ENCODE measurements at regions of chr7 and their contacts with region 1.

Region 1: GRCh38 chr7:151759591-151760042 is 117.3 kb downstream of the PRKAG2 start:
- DNase-seq: peak; percentile 72
- H3K4me3 Mint-ChIP-seq: no peak overlapping the region
- H3K27ac Mint-ChIP-seq: no peak overlapping the region
- H3K4me1 Mint-ChIP-seq: peaks cover 19% of the 10 kb centered on the region
- H3K27me3 Mint-ChIP-seq: no peaks in the 10 kb centered on the region

Region 2: GRCh38 chr7:151448261-151449252 is 311.1 kb before region 1 on chr7:
- CTCF ChIA-PET with region 1: interaction called, 36 read pairs
- POLR2A ChIA-PET with region 1: no interaction called
- intact Hi-C with region 1: no loop called
- DNase-seq: peak; percentile 82
- H3K4me3 Mint-ChIP-seq: peak overlapping the region; percentile 65
- H3K27ac Mint-ChIP-seq: no peak overlapping the region
- H3K4me1 Mint-ChIP-seq: peaks cover 4% of the 10 kb centered on the region
- H3K27me3 Mint-ChIP-seq: peaks cover 2% of the 10 kb centered on the region

Region 3: GRCh38 chr7:151519765-151520418 is 239.7 kb before region 1 on chr7 and contains the start of gene RHEB:
- CTCF ChIA-PET with region 1: interaction called, 3 read pairs
- POLR2A ChIA-PET with region 1: no interaction called
- intact Hi-C with region 1: loop called (anchors 2 kb)
- DNase-seq: peak; percentile 99
- H3K4me3 Mint-ChIP-seq: peak within 1 kb of the TSS; percentile 92
- H3K27ac Mint-ChIP-seq: peak within 1 kb of the TSS; percentile 96
- H3K4me1 Mint-ChIP-seq: peaks cover 35% of the 10 kb centered on the region
- H3K27me3 Mint-ChIP-seq: no peaks in the 10 kb centered on the region
- total RNA-seq, gene RHEB: 62.0 to 64.6 TPM

Region 4: DNA sequence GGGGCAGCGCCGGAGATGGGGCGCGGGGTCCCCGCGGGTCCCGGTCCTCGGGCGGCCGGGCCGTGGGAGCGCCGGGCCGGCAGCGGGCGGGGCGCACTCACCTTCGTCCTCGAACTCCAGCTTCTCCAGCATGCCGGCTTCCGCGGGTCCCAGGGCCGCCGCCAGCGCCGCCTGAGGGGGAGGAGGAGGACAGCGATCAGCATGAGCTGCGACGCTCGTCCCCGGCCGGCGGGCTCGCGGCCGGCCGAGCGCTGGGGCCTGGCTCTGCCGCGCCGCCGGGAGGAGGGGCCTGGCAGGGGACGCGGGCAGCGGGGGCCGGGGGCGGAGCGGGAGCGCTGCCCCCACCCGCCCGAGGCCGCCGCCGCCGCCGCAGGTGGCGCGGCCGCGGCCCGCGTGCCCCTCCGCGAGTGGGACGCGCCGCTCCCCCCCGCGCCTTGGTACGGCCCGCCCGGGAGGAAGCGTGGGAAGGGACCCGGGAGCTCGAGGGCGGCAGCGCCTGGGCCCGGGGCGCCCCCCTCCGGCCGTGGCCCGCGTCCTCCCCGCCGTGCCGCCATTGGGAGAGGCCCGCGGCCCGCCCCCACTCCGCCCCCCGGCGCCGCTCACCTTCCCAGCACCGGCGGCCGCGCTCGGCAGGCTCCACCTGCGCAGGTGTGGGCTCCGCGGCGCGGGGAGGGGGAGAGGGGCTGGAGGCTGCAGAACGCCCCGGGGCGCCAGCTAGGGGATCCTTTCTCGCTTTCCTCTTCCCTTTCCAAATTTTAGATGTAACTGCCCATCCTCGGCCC is 127.5 kb before region 1 on chr7:
- CTCF ChIA-PET with region 1: interaction called, 62 read pairs
- POLR2A ChIA-PET with region 1: interaction called, 4 read pairs
- intact Hi-C with region 1: loop called (anchors 1 kb)
- DNase-seq: peak; percentile 90
- H3K4me3 Mint-ChIP-seq: peak overlapping the region; percentile 95
- H3K27ac Mint-ChIP-seq: peak overlapping the region; percentile 99
- H3K4me1 Mint-ChIP-seq: peaks cover 21% of the 10 kb centered on the region
- H3K27me3 Mint-ChIP-seq: no peaks in the 10 kb centered on the region

Region 5: DNA sequence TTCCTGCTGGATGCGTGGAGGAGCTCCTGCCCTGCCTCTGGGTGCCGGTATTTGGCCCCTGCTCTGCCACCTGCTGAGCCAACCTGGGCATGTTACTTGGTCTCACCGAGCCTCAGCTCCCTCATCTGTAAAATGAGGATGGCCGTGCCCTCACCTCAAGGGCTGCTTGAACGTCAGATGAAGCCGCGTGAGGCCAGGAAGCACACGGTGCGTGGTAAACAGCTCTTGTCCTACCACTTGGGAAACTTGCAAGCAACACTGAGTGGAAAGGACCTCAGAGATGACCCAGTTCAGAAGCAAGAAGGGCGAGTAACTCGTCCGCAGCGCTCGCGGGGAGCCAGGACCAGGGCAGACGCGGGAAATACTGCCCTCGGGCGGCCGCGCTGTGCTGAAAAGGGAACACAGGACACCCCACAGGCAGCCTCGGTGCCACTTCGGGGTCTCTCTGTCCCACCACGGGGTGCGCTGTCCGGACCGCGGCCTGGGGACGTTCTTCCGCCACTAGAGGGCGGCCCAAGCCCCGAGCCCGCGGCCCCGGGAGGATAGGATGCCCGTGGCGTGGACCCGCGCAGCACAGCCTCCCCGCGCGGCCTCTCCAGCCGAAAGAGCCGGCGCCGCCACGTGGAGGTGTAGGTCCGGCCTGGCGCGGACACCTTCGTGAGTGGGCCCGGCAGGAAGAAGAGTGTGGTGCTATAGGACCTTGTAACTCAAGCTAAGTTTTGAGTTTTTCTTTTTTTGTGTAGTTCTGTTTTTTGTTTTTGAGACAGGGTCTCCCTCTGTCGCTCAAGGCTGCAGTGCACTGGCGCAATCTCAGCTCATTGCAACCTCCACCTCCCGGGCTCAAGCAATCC is 23.2 kb after region 1 on chr7:
- CTCF ChIA-PET with region 1: interaction called, 47 read pairs
- POLR2A ChIA-PET with region 1: no interaction called
- intact Hi-C with region 1: no loop called
- DNase-seq: peak; percentile 80
- H3K4me3 Mint-ChIP-seq: peak overlapping the region; percentile 76
- H3K27ac Mint-ChIP-seq: no peak overlapping the region
- H3K4me1 Mint-ChIP-seq: peaks cover 12% of the 10 kb centered on the region
- H3K27me3 Mint-ChIP-seq: no peaks in the 10 kb centered on the region